ENCODE measurements at regions of chr10 and their contacts with region 1.

Region 1: GRCh38 chr10:67648613-67649229 is 47.3 kb downstream of the CTNNA3 start:
- DNase-seq: no peak
- H3K4me3 ChIP-seq: no peak overlapping the region
- H3K27ac ChIP-seq: no peak overlapping the region
- H3K4me1 ChIP-seq: no peaks in the 10 kb centered on the region
- H3K27me3 ChIP-seq: no peaks in the 10 kb centered on the region
- CTCF ChIP-seq: no peak

Region 2: GRCh38 chr10:67140641-67141040 is 508.1 kb before region 1 on chr10:
- intact Hi-C with region 1: loop called (anchors 5 kb)
- DNase-seq: no peak
- H3K4me3 ChIP-seq: no peak overlapping the region
- H3K27ac ChIP-seq: no peak overlapping the region
- H3K4me1 ChIP-seq: peaks cover 0 to 4% (median 0%) of the 10 kb centered on the region in 4 donors
- H3K27me3 ChIP-seq: no peaks in the 10 kb centered on the region
- CTCF ChIP-seq: no peak

Region 3: DNA sequence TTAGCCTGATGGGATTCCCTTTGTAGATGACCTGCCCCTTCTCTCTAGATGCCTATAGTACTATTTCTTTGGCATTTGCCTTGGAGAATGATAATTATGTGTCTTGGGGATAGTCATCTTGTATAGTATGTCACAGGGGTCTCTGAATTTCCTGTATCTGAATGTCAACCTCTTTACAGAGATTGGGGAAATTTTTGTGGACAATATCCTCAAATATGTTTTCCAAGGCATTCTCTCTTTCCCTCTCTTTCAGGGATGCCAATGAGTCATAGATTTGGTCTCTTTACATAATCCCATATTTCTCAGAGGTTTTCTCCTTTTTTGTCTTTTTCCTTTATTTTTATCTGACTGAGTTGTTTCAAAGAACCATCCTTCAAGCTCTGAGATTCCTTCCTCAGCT is 52.1 kb before region 1 on chr10:
- intact Hi-C with region 1: no loop called
- DNase-seq: no peak
- H3K4me3 ChIP-seq: no peak overlapping the region
- H3K27ac ChIP-seq: no peak overlapping the region
- H3K4me1 ChIP-seq: no peaks in the 10 kb centered on the region
- H3K27me3 ChIP-seq: no peaks in the 10 kb centered on the region
- CTCF ChIP-seq: no peak